ENCODE measurements at regions of chr1 and their contacts with region 1.

Region 1: DNA sequence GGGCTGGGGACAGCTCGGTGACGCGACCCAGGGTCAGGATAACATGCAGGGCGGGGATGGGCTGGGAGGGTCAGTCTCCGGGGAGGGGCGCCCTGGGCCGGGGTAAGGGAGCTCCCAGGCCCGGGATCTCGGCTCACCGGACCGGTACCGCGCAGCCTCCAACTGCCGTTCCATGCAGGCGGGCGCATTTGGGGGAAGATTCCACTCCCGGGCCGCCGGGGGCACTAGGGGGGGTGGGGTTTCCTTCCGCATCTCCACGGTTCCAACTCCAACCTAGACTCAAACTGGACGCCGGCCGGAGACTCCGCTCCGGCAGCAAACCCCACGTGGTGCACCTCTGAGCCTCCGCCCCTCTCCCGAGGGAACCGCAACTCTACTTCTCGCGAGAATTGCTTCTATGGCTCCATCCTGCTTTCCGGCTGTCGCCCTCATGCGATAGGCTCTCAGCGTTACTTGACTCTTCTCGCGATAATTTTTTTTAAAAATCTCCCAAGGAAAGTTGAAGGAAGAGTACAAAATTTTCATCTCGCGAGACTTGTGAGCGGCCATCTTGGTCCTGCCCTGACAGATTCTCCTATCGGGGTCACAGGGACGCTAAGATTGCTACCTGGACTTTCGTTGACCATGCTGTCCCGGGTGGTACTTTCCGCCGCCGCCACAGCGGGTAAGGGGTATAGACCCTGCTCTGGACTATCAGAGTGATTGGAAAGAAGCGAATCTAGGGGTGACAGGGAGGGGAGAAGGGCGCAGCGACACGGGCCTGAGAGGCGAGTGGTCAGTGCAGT is at the starts of genes ATP5PB and WDR77:
- DNase-seq: peak; percentile 91
- H3K4me3 Mint-ChIP-seq: peak within 1 kb of the TSS; percentile 100
- H3K27ac Mint-ChIP-seq: peak within 1 kb of the TSS; percentile 96
- H3K4me1 Mint-ChIP-seq: peaks cover 52% of the 10 kb centered on the region
- H3K27me3 Mint-ChIP-seq: no peaks in the 10 kb centered on the region
- total RNA-seq, gene ATP5PB: 294 and 308 TPM in 2 replicates
- total RNA-seq, gene WDR77: 46.5 and 52.6 TPM in 2 replicates

Region 2: DNA sequence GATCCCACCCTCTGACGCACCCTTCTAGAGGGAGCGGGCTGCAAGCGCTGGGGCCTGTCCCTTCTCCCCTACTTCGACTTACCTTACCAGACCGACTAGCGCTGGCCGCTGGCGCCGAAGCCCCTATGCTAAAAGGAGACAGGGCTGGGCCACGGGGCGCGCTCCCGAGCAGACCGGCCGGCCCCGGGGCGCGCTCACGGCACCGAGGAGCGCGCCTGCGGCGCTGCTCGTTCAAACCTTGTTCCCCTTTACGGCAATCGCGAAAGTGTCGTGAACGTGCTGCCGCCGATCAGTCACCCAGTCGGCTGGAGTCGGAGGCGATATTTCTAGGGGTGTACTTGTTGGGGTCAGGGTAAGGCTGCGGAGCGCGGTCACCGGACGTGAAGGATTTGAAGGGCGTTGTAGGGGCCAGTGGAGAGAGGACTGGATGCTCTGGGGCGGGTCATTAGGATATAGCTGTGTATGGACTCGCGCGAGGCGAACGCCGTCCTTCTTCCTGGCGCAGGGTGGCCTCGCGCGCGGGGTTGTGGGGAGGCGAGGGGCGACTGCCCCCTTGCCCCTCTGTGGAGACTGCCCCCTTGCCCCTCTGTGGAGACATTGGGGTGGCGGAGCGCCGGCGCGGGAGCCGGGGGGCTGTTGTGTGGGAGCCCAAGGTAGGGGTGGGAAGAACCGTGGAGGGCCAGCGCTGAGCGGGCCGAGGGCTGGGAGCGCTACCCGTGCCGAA is 309.0 kb before region 1 on chr1 and contains the starts of genes CEPT1 and DRAM2:
- intact Hi-C with region 1: loop called (anchors 1 kb)
- DNase-seq: peak; percentile 91
- H3K4me3 Mint-ChIP-seq: peak within 1 kb of the TSS; percentile 96
- H3K27ac Mint-ChIP-seq: peak within 1 kb of the TSS; percentile 92
- H3K4me1 Mint-ChIP-seq: peaks cover 36% of the 10 kb centered on the region
- H3K27me3 Mint-ChIP-seq: no peaks in the 10 kb centered on the region
- total RNA-seq, gene CEPT1: 29.8 and 34.8 TPM in 2 replicates
- total RNA-seq, gene DRAM2: 22.9 and 24.7 TPM in 2 replicates

Region 3: GRCh38 chr1:111346089-111346885 is 102.8 kb before region 1 on chr1:
- intact Hi-C with region 1: loop called (anchors 5 kb)
- DNase-seq: peak; percentile 82
- H3K4me3 Mint-ChIP-seq: peak overlapping the region; percentile 84
- H3K27ac Mint-ChIP-seq: no peak overlapping the region
- H3K4me1 Mint-ChIP-seq: peaks cover 16% of the 10 kb centered on the region
- H3K27me3 Mint-ChIP-seq: peaks cover 17% of the 10 kb centered on the region

Region 4: DNA sequence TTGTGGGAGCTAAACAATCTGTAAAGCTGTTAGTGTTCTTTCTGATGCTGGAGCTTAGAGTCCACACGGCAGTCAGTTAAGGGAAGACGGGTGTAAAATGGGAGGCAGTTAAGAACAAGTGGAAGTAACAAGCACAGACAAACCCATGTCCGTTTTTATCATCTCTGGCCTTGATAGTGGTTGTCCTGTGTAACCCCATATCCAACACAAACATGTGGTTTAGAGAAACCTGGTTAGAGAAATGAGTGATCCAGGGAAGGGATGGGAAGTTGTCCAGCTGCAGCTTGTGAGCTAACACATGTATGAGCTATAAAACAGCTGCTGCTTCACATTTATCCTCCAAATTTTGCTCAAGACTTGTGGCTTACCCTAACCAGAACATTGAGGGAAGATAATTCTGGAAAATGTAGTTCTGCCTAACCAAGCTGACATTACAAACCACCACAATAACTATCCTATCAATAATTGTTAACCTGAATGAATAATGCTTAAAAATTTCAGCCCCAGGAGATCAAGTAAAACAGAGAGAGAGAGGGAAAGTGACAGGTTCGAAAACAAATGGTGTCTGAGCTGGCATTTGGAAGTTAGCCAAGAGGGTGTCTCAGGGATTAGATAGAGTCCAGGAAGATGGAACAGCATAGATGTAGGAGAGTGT is 14.0 kb after region 1 on chr1:
- intact Hi-C with region 1: no loop called
- DNase-seq: no peak
- H3K4me3 Mint-ChIP-seq: no peak overlapping the region
- H3K27ac Mint-ChIP-seq: no peak overlapping the region
- H3K4me1 Mint-ChIP-seq: peaks cover 13% of the 10 kb centered on the region
- H3K27me3 Mint-ChIP-seq: no peaks in the 10 kb centered on the region

Region 5: GRCh38 chr1:111475701-111476100 is 26.6 kb after region 1 on chr1:
- intact Hi-C with region 1: loop called (anchors 1 kb)
- DNase-seq: peak; percentile 30
- H3K4me3 Mint-ChIP-seq: peak overlapping the region; percentile 44
- H3K27ac Mint-ChIP-seq: peak overlapping the region; percentile 70
- H3K4me1 Mint-ChIP-seq: peaks cover 49% of the 10 kb centered on the region
- H3K27me3 Mint-ChIP-seq: peaks cover 7% of the 10 kb centered on the region

Region 6: GRCh38 chr1:111769517-111770146 is 320.5 kb after region 1 on chr1:
- intact Hi-C with region 1: no loop called
- DNase-seq: no peak
- H3K4me3 Mint-ChIP-seq: no peak overlapping the region
- H3K27ac Mint-ChIP-seq: no peak overlapping the region
- H3K4me1 Mint-ChIP-seq: peaks cover 2% of the 10 kb centered on the region
- H3K27me3 Mint-ChIP-seq: no peaks in the 10 kb centered on the region